Activated B cell treated with CpG ODN at 0.5 μM for 24 hours (primary cell): ENCODE measurements at regions of chr17 and their contacts with region 1.

Region 1: DNA sequence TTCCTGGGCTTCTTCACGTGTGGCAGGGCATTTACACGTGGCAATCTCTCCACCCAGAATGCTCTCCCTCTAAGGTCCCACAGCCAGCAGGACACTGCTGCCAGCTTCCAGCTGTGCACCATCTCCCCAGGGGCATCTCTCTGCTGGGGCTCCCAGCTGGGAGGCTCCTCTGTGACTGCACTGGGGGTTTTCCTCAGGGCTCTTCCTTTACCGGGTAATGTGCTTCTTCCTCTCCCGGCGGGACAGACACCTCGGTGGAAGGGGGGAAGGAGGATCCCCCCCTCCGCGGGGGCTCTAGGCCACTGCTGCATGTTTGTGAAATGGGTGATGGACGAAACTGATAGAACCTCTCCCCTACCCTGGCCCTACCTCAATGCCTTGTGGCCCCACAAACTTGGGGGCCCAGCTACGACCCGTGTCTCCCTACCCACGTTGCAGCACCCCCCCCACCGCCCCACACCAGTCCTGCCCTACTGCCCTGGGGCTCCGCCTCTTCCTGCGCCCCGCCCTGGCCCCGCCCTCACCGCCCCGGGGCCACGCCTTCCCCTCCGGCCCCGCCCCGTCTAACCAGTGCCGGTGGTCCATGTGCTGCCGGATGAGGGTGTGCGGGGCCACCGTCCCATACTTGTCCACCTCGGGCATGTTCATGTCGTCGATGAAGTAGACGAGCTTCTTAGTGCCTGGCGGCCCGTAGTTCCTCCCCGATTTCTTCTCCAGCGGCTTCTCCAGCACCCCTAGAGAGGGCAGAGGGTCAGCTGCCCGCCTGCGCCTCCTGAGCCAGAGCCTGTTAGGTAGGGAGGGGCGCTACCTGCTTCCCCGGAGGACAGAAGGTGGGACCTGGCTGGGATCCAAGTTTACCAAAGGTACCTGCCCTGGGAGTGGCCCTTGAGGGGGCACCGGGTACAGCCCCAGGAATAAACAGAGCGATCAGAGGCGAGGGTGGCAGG is 92.6 kb downstream of the DNAH17 start:
- DNase-seq: peak; percentile 62
- ATAC-seq: peak; percentile 98
- H3K4me3 Mint-ChIP-seq: peak overlapping the region; percentile 75
- H3K27ac Mint-ChIP-seq: no peak overlapping the region
- H3K4me1 Mint-ChIP-seq: peaks cover 11% of the 10 kb centered on the region
- H3K27me3 Mint-ChIP-seq: peaks cover 15% of the 10 kb centered on the region
- CTCF ChIP-seq: no peak

Region 2: GRCh38 chr17:78421484-78422266 is 62.9 kb before region 1 on chr17:
- CTCF ChIA-PET with region 1: no interaction called
- POLR2A ChIA-PET with region 1: no interaction called
- intact Hi-C with region 1: no loop called
- DNase-seq: peak; percentile 73
- ATAC-seq: peak; percentile 98
- H3K4me3 Mint-ChIP-seq: no peak overlapping the region
- H3K27ac Mint-ChIP-seq: no peak overlapping the region
- H3K4me1 Mint-ChIP-seq: peaks cover 2% of the 10 kb centered on the region
- H3K27me3 Mint-ChIP-seq: no peaks in the 10 kb centered on the region
- CTCF ChIP-seq: peak; percentile 69

Region 3: GRCh38 chr17:78962345-78962983 is 477.9 kb after region 1 on chr17:
- CTCF ChIA-PET with region 1: no interaction called
- POLR2A ChIA-PET with region 1: interaction called, 10 read pairs
- intact Hi-C with region 1: no loop called
- DNase-seq: no peak
- ATAC-seq: no peak
- H3K4me3 Mint-ChIP-seq: no peak overlapping the region
- H3K27ac Mint-ChIP-seq: no peak overlapping the region
- H3K4me1 Mint-ChIP-seq: peaks cover 17% of the 10 kb centered on the region
- H3K27me3 Mint-ChIP-seq: peaks cover 3% of the 10 kb centered on the region
- CTCF ChIP-seq: no peak